GM10248 (cell line): ENCODE measurements at regions of chr4 and their contacts with region 1.

Region 1: DNA sequence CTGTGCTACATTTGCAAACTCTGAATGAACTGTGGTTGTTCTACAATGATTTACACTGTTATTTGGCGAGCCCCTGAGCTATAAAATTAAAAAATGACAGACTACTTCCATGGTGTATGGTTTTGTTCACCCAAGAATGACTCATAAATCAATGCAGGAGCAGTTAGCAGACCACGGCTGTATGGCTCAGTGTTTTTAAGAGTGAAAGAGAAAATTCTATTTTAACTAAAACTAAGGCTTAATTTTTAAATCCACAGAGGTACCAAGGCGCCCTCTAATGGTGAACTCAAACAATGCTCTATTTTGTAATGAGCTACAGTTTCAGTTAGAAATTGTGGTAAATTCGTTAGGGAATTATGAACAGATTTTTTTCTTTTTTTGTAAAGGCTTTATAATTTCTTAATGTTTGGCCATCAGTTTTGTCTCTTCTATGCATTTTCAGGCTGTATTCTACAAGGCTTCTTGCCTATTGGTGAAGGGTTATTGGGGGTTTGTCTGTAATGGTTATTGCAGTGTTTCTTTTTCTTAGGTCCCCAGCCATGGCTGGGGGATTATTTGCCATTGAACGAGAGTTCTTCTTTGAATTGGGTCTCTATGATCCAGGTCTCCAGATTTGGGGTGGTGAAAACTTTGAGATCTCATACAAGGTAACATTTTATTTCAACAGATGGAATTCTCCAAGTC is 32.5 kb downstream of the HMGB2 start:
- DNase-seq: peak; percentile 36
- CTCF ChIP-seq: peak; percentile 58

Region 2: DNA sequence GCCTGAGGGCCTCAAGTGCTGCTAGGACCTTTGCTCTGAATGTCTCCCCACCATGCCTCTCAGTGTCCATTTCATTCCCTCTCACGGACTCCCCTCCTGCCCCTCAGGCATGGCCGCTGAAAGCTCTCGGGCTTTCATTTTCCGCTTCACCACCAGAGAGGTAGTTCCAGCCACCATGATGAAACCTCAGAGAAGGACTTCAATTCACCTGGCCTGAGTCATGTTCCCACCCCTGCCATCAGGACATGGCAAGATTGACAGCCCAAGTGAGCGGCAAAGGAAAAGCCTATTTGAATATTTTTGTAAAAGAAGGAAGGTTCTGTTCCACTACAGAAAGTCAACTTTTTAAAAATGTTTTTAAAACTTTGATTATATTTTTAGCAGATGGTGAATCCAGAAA is 382.4 kb before region 1 on chr4:
- CTCF ChIA-PET with region 1: no interaction called
- POLR2A ChIA-PET with region 1: no interaction called
- DNase-seq: no peak
- CTCF ChIP-seq: no peak

Region 3: DNA sequence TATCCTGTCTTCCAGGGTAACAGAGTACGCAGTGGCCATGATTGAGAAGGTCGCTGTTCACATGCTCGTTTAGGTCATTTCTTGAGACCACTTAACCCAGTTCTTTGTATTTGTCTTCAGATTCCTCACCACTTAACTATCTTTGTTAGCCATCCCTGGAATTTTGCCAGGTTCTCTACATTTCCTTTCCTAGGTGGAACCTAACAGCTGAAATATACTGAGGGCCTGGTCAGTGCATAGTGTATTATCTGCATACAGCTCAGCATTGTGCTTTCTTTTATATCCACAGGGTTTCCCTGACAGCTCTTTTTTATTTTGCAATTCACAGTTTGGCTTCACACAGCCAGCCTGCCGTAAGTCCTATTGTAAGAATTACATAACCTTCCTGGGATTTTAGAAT is 281.9 kb before region 1 on chr4:
- CTCF ChIA-PET with region 1: interaction called, 82 read pairs
- POLR2A ChIA-PET with region 1: no interaction called
- DNase-seq: no peak
- CTCF ChIP-seq: no peak

Region 4: GRCh38 chr4:173257732-173258717 is 43.6 kb before region 1 on chr4:
- CTCF ChIA-PET with region 1: interaction called, 54 read pairs
- POLR2A ChIA-PET with region 1: no interaction called
- DNase-seq: peak; percentile 44
- CTCF ChIP-seq: peak; percentile 83

Region 5: DNA sequence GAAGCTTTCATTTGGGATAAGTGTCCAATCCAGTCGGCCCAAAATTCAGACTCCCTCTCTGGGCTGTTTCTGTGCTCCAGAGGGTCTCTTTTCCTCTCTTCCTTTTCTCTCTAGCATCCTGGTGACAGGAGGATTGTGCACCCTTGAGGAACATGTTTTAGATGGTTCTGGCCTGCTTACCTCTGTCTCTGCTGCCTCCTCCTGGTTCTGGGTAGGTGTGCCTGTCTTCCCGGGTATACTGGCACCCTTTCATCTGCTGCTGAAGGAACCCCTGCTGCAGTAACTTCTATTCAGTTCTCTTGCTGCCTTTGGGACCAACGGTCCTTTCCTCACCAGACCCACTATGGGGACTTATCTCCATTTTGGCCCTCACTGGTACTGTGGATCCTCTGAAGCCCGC is 20.7 kb before region 1 on chr4:
- CTCF ChIA-PET with region 1: interaction called, 27 read pairs
- POLR2A ChIA-PET with region 1: no interaction called
- DNase-seq: no peak
- CTCF ChIP-seq: no peak

Region 6: GRCh38 chr4:173334085-173334772 is 32.6 kb after region 1 on chr4 and contains the start of gene HMGB2:
- CTCF ChIA-PET with region 1: interaction called, 10 read pairs
- POLR2A ChIA-PET with region 1: no interaction called
- DNase-seq: peak; percentile 98
- CTCF ChIP-seq: no peak

Region 7: GRCh38 chr4:173420324-173420752 is 118.7 kb after region 1 on chr4:
- CTCF ChIA-PET with region 1: interaction called, 16 read pairs
- POLR2A ChIA-PET with region 1: no interaction called
- DNase-seq: peak; percentile 24
- CTCF ChIP-seq: peak; percentile 40